ENCODE measurements at regions of chr17 and their contacts with region 1.

Region 1: GRCh38 chr17:63984651-63985386 is 12.1 kb upstream of the SCN4A start:
- DNase-seq: peak; percentile 84
- ATAC-seq: peak; percentile 84
- H3K4me3 Mint-ChIP-seq: no peak overlapping the region
- H3K27ac Mint-ChIP-seq: peak overlapping the region; percentile 66
- H3K4me1 Mint-ChIP-seq: peaks cover 23% of the 10 kb centered on the region
- H3K27me3 Mint-ChIP-seq: peaks cover 2% of the 10 kb centered on the region

Region 2: GRCh38 chr17:63931099-63931561 is 53.7 kb before region 1 on chr17:
- CTCF ChIA-PET with region 1: interaction called, 20 read pairs
- POLR2A ChIA-PET with region 1: no interaction called
- DNase-seq: peak; percentile 75
- ATAC-seq: peak; percentile 80
- H3K4me3 Mint-ChIP-seq: peak overlapping the region; percentile 93
- H3K27ac Mint-ChIP-seq: peak overlapping the region; percentile 82
- H3K4me1 Mint-ChIP-seq: peaks cover 29% of the 10 kb centered on the region
- H3K27me3 Mint-ChIP-seq: peaks cover 10% of the 10 kb centered on the region

Region 3: DNA sequence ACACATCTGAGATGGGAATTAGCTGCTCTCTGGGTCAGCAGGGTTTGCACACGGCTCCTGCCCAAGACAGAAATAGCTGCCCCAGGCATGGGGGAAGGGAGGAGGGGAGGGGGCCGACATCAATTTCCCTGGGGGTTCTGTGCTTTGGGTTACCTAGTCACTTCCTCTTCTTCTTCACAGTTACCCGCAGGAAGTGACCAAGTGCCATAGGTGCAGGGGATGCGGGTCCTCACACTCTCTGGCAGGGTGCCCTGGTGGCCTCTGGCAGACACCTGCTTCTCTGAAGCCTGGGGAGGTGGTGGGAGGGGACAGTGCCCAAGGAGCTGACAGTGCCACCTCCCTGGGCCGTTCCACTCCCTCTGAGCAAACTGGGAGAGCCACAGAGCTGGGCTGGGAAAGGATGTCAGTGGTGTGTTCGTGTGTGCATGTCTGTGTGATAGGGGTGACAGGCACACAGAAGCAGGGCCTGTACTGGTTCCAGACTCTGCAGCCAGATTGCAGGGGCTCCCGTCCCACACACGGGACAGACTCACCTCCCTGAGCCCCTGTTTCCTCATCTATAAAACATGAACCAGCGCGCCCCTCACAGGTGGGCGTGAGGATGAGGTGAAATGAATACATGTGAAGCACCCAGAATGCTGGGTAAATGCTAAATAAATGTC is 30.3 kb before region 1 on chr17:
- CTCF ChIA-PET with region 1: interaction called, 10 read pairs
- POLR2A ChIA-PET with region 1: no interaction called
- DNase-seq: peak; percentile 57
- ATAC-seq: peak; percentile 76
- H3K4me3 Mint-ChIP-seq: no peak overlapping the region
- H3K27ac Mint-ChIP-seq: peak overlapping the region; percentile 70
- H3K4me1 Mint-ChIP-seq: peaks cover 21% of the 10 kb centered on the region
- H3K27me3 Mint-ChIP-seq: peaks cover 4% of the 10 kb centered on the region

Region 4: GRCh38 chr17:64020056-64020766 is 35.4 kb after region 1 on chr17 and contains the start of gene ICAM2:
- CTCF ChIA-PET with region 1: interaction called, 31 read pairs
- POLR2A ChIA-PET with region 1: interaction called, 5 read pairs
- DNase-seq: peak; percentile 96
- ATAC-seq: peak; percentile 78
- H3K4me3 Mint-ChIP-seq: peak within 1 kb of the TSS; percentile 96
- H3K27ac Mint-ChIP-seq: peak within 1 kb of the TSS; percentile 100
- H3K4me1 Mint-ChIP-seq: peaks cover 75% of the 10 kb centered on the region
- H3K27me3 Mint-ChIP-seq: no peaks in the 10 kb centered on the region
- total RNA-seq, gene ICAM2: 48.4 to 51.3 TPM

Region 5: DNA sequence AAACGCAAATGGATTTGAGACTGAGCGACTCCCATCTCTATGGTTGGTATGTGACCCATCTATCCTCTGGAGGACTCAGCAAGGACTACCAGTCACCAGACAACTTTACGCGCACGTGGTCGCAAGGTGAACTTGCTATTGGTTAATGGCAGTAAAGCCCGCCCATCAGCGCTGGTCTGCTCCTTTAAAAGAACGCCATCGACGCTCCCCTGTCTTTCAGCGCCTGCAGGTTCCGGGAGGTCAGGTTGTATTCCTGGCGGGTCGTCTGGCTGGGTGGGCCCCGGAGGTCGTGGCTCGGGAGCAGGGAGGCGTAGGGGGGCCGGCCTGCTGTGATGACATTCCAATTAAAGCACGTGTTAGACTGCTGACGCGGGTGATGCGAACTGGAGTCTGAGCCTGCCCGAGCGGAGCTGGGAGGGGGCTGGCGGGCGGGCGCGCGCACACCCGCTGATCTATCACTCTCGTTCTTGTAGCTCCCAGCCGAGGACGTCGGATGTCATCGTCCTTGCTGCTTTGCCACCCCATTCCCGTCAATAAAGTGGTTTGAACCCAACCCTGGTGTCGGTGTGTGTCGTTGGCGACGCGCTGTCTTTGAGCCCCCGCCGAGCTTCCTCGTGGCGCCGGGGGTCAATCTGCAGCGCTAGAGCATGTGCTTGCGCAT is 161.1 kb after region 1 on chr17:
- CTCF ChIA-PET with region 1: no interaction called
- POLR2A ChIA-PET with region 1: no interaction called
- DNase-seq: peak; percentile 98
- ATAC-seq: peak; percentile 96
- H3K4me3 Mint-ChIP-seq: no peak overlapping the region
- H3K27ac Mint-ChIP-seq: no peak overlapping the region
- H3K4me1 Mint-ChIP-seq: peaks cover 26% of the 10 kb centered on the region
- H3K27me3 Mint-ChIP-seq: no peaks in the 10 kb centered on the region